Right lobe of liver (tissue), 6 donors: ENCODE measurements at regions of chr2 and their contacts with region 1.

Region 1: DNA sequence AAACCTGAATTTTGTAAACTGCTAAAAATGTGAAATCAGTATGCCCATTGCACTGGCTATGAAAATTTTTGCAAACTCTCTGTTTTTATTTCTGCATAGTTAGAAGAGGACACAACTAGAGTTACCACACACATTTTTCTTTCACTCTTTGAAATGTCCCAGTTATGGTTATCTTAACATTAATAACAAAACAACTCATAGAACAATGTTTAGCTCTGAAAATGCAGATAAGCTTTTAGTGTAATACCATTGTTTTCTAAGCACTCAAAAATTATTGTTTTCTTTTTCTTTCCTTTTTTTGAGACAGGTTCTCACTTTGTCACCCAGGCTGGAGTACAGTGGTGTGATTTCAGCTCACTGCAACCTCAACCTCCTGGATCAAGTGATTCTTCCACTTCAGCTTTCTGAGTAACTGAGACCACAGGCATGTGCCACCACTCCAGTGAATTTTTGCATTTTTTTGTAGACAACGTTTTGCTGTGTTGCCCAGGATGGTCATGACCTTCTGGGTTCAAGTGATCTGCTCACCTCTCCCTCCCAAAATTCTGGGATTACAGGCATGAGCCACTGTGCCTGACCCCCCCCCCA is 1204.5 kb upstream of the ZEB2 start:
- DNase-seq: no peak
- ATAC-seq: no peak
- H3K4me3 ChIP-seq: no peak overlapping the region
- H3K27ac ChIP-seq: no peak overlapping the region
- H3K4me1 ChIP-seq: no peaks in the 10 kb centered on the region
- H3K27me3 ChIP-seq: no peaks in the 10 kb centered on the region
- CTCF ChIP-seq: no peak
- POLR2A ChIP-seq: no peak

Region 2: GRCh38 chr2:146321175-146321574 is 596.8 kb after region 1 on chr2:
- intact Hi-C with region 1: loop called in 1 of 2 experiments (anchors 10 kb)
- DNase-seq: no peak
- ATAC-seq: no peak
- H3K4me3 ChIP-seq: no peak overlapping the region
- H3K27ac ChIP-seq: no peak overlapping the region
- H3K4me1 ChIP-seq: no peaks in the 10 kb centered on the region
- H3K27me3 ChIP-seq: no peaks in the 10 kb centered on the region
- CTCF ChIP-seq: no peak
- POLR2A ChIP-seq: no peak